Motor neuron (in vitro differentiated cells): ENCODE measurements at regions of chr4 and their contacts with region 1.

Region 1: DNA sequence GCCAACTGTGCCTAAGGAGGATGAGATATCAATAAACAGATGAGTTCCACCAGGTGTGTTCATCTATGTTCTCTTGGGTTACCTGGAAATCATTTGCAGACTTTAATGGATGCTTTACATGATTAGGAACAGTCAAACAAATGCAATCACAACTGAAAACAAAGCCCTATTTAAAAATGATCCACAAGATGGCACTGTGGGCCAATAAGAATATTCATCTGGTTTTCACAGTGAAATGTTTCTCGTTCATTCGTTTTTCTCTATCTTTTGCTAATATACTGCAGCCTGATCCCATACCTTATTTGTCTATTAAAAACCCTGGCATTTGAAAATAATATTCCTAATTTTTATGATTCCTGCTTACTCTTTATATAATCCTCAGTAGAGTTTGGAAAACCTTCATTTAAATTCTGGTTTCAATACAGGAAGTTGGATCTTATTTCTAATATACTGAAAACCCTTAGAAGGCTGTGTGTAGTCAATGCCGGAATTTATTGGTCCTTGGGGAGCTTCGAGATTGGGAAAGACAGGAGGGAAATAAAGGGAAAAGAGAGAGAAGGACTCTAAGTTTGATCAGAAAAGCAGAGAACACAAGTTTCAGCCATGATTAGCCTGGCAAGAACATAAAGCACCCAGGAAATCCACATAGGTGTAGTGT is 63.8 kb upstream of the TAPT1 start:
- ATAC-seq: peak in 5 of 8 experiments; percentile 25 to 51 (median 39)
- H3K4me3 ChIP-seq: no peak overlapping the region
- H3K27ac ChIP-seq: no peak overlapping the region
- H3K4me1 ChIP-seq: peaks cover 20 to 22% of the 10 kb centered on the region in 2 donors

Region 2: DNA sequence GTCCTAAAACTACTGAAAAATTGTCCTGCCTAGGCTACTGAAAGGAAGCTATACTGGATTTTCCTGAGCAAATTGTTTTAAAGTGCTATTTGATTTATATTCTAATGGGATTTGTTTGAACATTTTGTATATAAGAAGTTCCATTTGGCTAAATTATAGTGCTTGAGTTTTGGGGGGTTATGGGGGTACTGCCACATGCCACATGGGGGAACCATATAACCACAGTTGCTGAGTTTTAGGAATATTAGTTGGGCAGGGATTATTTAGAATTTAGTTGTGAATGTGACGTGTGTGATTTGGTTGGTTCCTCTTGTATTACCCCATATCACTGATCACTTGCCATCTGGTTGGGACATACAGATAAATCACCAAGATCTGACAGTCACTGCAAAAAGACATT is 160.7 kb after region 1 on chr4:
- in situ Hi-C with region 1: loop called in 1 of 9 experiments (anchors 25 kb)
- ATAC-seq: no peak
- H3K4me3 ChIP-seq: no peak overlapping the region
- H3K27ac ChIP-seq: no peak overlapping the region
- H3K4me1 ChIP-seq: peaks cover 6 to 11% of the 10 kb centered on the region in 2 donors

Region 3: DNA sequence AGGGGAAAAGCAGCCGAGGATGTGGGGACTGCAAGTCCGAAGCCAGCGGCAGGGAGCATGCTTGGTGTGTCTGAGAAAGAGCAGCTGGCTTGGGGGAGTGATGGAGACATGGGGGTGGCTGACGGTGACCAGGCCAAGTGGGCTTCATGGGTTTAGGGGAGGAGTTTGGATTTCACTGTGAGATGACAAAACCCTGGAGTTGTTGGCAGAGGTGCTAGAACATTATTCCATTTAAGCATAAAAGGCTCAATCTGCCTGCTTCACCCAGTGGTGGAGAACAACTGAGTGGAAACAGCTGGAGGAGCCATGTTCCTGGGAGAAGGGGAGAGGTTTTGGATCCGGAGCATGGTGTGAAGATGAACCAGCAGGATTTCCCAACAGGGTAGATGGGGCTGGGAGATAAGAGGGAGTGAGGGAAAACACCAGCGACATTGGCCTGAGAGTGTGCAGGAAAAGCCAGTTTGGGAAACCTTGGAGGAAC is 254.3 kb after region 1 on chr4:
- in situ Hi-C with region 1: no loop called
- ATAC-seq: peak in 1 of 8 experiments; percentile 15
- H3K4me3 ChIP-seq: no peak overlapping the region
- H3K27ac ChIP-seq: no peak overlapping the region
- H3K4me1 ChIP-seq: no peaks in the 10 kb centered on the region

Region 4: DNA sequence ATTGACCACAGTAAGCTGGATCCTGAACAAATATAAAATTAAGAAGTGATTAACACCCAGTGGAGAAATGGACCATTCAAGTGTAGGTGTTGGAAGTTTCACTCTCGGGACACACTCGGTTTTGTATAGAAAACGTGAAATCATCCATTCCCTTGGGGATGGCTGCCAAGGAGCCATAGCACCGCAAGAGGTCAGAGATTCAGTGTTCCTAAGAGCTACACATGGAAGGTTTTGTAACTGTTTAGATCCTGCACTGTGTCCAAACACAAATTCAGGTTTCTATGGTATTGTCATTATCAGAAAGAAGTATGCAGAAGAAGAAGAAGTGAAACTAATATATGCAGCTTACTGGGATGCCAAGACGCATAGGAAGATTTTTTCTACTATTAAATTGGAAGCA is 327.4 kb after region 1 on chr4:
- in situ Hi-C with region 1: no loop called
- ATAC-seq: peak in 6 of 8 experiments; percentile 21 to 84 (median 48)
- H3K4me3 ChIP-seq: no peak overlapping the region
- H3K27ac ChIP-seq: no peak overlapping the region
- H3K4me1 ChIP-seq: peaks cover 0 to 46% of the 10 kb centered on the region in 2 donors

Region 5: GRCh38 chr4:17324386-17324830 is 1034.4 kb after region 1 on chr4:
- in situ Hi-C with region 1: loop called in 7 of 9 experiments (anchors 25 kb)
- ATAC-seq: peak in 7 of 8 experiments; percentile 32 to 75 (median 43)
- H3K4me3 ChIP-seq: no peak overlapping the region
- H3K27ac ChIP-seq: no peak overlapping the region
- H3K4me1 ChIP-seq: peaks cover 8 to 10% of the 10 kb centered on the region in 2 donors

Region 6: GRCh38 chr4:17347445-17347844 is 1057.4 kb after region 1 on chr4:
- in situ Hi-C with region 1: loop called in 6 of 9 experiments (anchors 25 kb)
- ATAC-seq: peak in 3 of 8 experiments; percentile 54 to 74 (median 69)
- H3K4me3 ChIP-seq: no peak overlapping the region
- H3K27ac ChIP-seq: no peak overlapping the region
- H3K4me1 ChIP-seq: no peaks in the 10 kb centered on the region

Region 7: GRCh38 chr4:17447675-17448298 is 1157.8 kb after region 1 on chr4:
- in situ Hi-C with region 1: loop called in 5 of 9 experiments (anchors 25 kb)
- ATAC-seq: peak; percentile 41 to 97 (median 74)
- H3K4me3 ChIP-seq: no peak overlapping the region
- H3K27ac ChIP-seq: no peak overlapping the region
- H3K4me1 ChIP-seq: peaks cover 0 to 5% of the 10 kb centered on the region in 2 donors

Region 8: DNA sequence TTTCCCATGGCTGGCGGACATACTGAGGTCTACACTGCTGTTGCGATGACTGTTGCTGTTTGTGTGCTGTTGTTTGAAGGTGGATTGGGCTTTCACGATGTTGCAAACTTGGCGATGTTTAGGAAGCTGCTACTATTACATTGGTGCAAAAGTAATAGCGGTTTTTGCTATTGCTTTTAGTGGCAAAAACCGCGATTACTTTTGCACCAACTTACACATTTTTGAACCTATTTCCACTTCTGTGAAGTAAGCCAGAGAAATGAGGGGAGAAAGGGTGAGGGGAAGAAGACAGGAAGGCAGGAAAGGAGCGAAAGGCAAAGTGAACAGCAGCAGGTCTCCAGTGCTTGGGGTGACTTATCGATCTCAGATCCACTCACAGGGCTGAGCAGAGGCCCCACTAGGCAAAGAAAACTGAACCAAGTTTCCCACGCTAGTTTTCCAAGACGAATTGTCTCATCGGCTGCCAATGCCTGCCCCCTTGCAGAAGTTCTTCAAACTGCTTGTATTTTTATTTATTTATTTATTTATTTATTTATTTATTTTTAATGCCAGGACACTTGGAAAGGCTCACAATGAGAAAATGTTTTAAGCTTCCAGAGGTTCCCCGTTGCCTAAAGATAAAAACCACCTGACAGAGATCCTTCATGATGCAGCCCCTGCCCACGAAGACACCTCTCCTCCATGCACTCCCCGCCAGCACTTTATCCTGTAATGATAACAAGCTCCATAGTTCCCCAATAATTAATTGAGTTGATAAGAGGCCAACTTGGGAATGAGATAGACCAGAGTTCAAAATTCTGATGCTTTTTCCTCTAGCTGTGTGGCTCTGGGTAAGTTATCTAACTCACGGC is 1178.6 kb after region 1 on chr4:
- in situ Hi-C with region 1: loop called in 6 of 9 experiments (anchors 10 to 25 kb)
- ATAC-seq: no peak
- H3K4me3 ChIP-seq: no peak overlapping the region
- H3K27ac ChIP-seq: no peak overlapping the region
- H3K4me1 ChIP-seq: peaks cover 0 to 3% of the 10 kb centered on the region in 2 donors

Region 9: GRCh38 chr4:17475481-17475880 is 1185.5 kb after region 1 on chr4:
- in situ Hi-C with region 1: loop called in 5 of 9 experiments (anchors 10 to 25 kb)
- ATAC-seq: no peak
- H3K4me3 ChIP-seq: no peak overlapping the region
- H3K27ac ChIP-seq: no peak overlapping the region
- H3K4me1 ChIP-seq: no peaks in the 10 kb centered on the region